ENCODE measurements at regions of chr12 and their contacts with region 1.

Region 1: DNA sequence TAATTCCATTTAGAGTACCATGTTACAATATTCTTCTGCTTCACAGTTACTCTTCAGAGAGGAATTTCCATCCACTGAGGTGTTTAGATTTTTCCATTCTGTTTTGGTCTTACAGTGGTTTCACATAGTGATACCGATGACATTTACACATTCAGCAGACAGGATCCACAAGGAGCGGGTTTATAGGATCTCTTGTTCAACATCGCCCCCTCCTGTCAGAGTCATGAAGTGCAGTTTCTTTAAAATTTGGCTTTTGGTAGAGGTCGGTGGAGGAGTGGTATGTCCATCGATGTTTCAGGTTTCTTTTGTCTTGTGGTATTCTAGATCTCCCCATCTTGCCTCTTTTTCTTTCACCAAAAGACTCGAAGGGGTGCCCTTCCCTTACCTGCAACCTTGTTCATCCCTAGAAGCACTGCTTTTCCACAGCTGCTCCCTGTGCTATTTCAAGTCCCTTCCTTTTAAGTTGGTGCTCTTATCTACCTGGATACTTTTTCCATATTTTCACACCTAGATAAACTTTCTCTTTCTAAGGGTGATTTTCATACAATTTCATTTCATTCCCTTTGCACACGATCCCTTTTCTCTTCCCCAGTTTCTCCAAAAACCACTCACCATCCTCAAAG is 181.3 kb downstream of the ITPR2 start:
- DNase-seq: peak; percentile 75
- H3K4me3 Mint-ChIP-seq: no peak overlapping the region
- H3K27ac Mint-ChIP-seq: no peak overlapping the region
- H3K4me1 Mint-ChIP-seq: peaks cover 16% of the 10 kb centered on the region
- H3K27me3 Mint-ChIP-seq: no peaks in the 10 kb centered on the region
- CTCF ChIP-seq: peak; percentile 89

Region 2: GRCh38 chr12:25970916-25971653 is 680.6 kb before region 1 on chr12:
- CTCF ChIA-PET with region 1: no interaction called
- POLR2A ChIA-PET with region 1: no interaction called
- intact Hi-C with region 1: loop called (anchors 5 kb)
- DNase-seq: no peak
- H3K4me3 Mint-ChIP-seq: no peak overlapping the region
- H3K27ac Mint-ChIP-seq: peak overlapping the region; percentile 42
- H3K4me1 Mint-ChIP-seq: peaks cover 61% of the 10 kb centered on the region
- H3K27me3 Mint-ChIP-seq: no peaks in the 10 kb centered on the region
- CTCF ChIP-seq: no peak

Region 3: GRCh38 chr12:26530461-26530860 is 121.2 kb before region 1 on chr12:
- CTCF ChIA-PET with region 1: no interaction called
- POLR2A ChIA-PET with region 1: no interaction called
- intact Hi-C with region 1: no loop called
- DNase-seq: no peak
- H3K4me3 Mint-ChIP-seq: no peak overlapping the region
- H3K27ac Mint-ChIP-seq: no peak overlapping the region
- H3K4me1 Mint-ChIP-seq: no peaks in the 10 kb centered on the region
- H3K27me3 Mint-ChIP-seq: no peaks in the 10 kb centered on the region
- CTCF ChIP-seq: no peak

Region 4: GRCh38 chr12:26690601-26691000 is 38.9 kb after region 1 on chr12:
- CTCF ChIA-PET with region 1: no interaction called
- POLR2A ChIA-PET with region 1: no interaction called
- intact Hi-C with region 1: no loop called
- DNase-seq: no peak
- H3K4me3 Mint-ChIP-seq: no peak overlapping the region
- H3K27ac Mint-ChIP-seq: peak overlapping the region; percentile 91
- H3K4me1 Mint-ChIP-seq: peaks cover 27% of the 10 kb centered on the region
- H3K27me3 Mint-ChIP-seq: no peaks in the 10 kb centered on the region
- CTCF ChIP-seq: no peak

Region 5: DNA sequence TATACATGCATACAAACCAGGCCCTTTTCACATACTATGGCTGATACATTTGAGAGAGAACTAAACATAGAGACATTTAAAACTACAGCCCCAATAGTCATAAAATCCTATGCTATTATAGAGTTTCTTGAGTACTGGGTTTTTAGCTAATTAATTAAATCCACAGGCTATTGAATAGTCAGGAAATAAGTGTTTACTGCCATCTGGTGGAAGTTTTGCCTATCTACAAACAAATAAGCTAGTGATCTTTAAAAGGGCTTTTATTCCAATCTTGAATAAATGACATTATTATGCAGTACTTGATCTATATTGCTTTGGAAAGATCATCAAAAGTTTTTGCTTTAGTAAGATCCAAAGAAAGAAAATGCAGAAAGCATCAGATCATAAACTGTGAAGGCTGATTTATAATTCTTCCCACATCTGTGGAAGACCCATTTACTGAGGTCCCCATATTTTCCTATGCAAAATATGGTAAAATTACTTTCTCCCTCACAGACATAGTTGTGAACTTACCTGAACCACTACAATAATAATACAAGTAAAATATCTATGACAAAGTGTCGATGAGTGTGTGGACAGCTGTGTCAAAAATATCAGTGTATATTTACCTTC is 50.0 kb after region 1 on chr12:
- CTCF ChIA-PET with region 1: interaction called, 4 read pairs
- POLR2A ChIA-PET with region 1: no interaction called
- intact Hi-C with region 1: loop called (anchors 10 kb)
- DNase-seq: peak; percentile 65
- H3K4me3 Mint-ChIP-seq: no peak overlapping the region
- H3K27ac Mint-ChIP-seq: no peak overlapping the region
- H3K4me1 Mint-ChIP-seq: peaks cover 13% of the 10 kb centered on the region
- H3K27me3 Mint-ChIP-seq: no peaks in the 10 kb centered on the region
- CTCF ChIP-seq: peak; percentile 66

Measured in MCF 10A (cell line).